ENCODE measurements at regions of chr17 and their contacts with region 1.

Region 1: DNA sequence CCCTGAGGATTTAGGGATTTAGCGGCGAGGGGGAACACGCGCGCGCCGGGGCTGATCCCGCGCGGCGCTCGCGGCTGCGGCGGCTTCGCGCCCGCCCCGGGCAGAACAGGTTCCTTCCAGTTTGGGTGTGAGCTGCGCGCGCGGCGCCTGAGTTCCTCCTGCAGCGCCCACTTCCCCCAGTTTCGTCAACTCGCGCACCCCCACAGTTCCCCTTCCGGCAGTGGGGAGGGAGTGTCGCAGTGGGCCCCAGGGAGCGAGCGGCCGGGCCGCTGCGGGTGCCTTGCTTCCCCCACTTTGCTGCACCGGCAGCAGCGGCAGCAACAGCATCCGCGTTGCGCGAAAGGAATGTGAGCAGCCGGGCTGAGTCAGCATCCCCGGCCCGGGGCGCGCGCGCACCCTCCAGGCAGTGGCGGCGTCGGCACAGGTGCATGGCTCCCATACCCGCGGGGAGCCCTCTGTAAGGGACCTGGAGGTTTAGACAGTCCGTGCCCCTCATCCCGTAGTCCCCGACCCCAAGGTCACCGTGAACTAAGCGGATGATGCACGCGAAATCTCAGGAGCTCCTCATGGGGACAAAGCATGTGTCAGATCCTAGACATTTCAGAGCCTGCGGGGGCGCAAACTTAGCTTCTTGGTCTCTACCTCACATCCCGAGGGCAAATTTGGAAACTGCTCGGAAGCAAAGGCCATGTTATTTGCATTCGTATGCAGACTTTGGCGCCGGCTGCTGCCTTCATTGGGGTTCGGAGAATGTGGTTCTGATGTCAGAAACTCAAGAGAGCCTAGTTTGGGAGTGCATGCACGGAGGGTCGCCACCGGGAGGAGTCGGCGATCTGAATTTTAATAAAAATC is 775 bp downstream of the ARSG start:
- DNase-seq: peak; percentile 93
- ATAC-seq: peak; percentile 78
- H3K4me3 Mint-ChIP-seq: peak overlapping the region; percentile 75
- H3K27ac Mint-ChIP-seq: peak overlapping the region; percentile 90
- H3K4me1 Mint-ChIP-seq: peaks cover 44% of the 10 kb centered on the region
- H3K27me3 Mint-ChIP-seq: no peaks in the 10 kb centered on the region

Region 2: DNA sequence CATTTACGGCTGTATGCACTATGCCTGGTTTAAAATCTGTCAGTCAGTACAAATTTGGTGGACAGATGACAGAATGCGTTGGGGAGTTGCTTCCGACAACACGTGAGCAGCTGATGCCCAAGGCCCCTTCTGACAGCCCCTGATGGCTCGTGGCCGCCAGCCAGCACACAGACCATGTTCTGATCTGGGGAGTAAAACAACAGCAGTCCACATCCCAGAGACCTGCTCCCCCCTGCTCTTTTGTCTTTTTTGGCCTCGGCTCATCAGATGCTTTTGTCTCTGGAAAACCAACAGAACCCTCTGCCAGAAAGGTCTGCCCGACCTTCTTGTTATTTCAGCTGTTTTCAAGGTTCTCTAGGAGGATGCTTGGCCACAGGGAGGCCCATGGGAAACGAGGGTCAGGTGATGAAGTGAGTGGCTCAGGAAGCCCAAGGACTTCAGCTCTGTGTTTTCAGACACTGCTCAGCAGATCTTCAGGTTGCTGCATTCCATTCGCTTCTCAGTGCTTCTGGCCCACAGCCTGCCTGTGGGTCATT is 10.1 kb after region 1 on chr17:
- POLR2A ChIA-PET with region 1: interaction called, 13 read pairs
- DNase-seq: no peak
- ATAC-seq: no peak
- H3K4me3 Mint-ChIP-seq: no peak overlapping the region
- H3K27ac Mint-ChIP-seq: no peak overlapping the region
- H3K4me1 Mint-ChIP-seq: peaks cover 16% of the 10 kb centered on the region
- H3K27me3 Mint-ChIP-seq: peaks cover 2% of the 10 kb centered on the region

Region 3: GRCh38 chr17:68346448-68346847 is 54.4 kb after region 1 on chr17:
- POLR2A ChIA-PET with region 1: interaction called, 55 read pairs
- DNase-seq: peak; percentile 75
- ATAC-seq: peak; percentile 86
- H3K4me3 Mint-ChIP-seq: peak overlapping the region; percentile 75
- H3K27ac Mint-ChIP-seq: peak overlapping the region; percentile 97
- H3K4me1 Mint-ChIP-seq: peaks cover 69% of the 10 kb centered on the region
- H3K27me3 Mint-ChIP-seq: no peaks in the 10 kb centered on the region

Region 4: GRCh38 chr17:68398691-68399637 is 106.9 kb after region 1 on chr17:
- POLR2A ChIA-PET with region 1: interaction called, 63 read pairs
- DNase-seq: peak; percentile 52
- ATAC-seq: peak; percentile 79
- H3K4me3 Mint-ChIP-seq: peak overlapping the region; percentile 65
- H3K27ac Mint-ChIP-seq: peak overlapping the region; percentile 94
- H3K4me1 Mint-ChIP-seq: peaks cover 26% of the 10 kb centered on the region
- H3K27me3 Mint-ChIP-seq: no peaks in the 10 kb centered on the region

Region 5: GRCh38 chr17:68457539-68458259 is 165.6 kb after region 1 on chr17:
- POLR2A ChIA-PET with region 1: interaction called, 38 read pairs
- DNase-seq: peak; percentile 99
- ATAC-seq: peak; percentile 92
- H3K4me3 Mint-ChIP-seq: peak overlapping the region; percentile 81
- H3K27ac Mint-ChIP-seq: peak overlapping the region; percentile 84
- H3K4me1 Mint-ChIP-seq: peaks cover 67% of the 10 kb centered on the region
- H3K27me3 Mint-ChIP-seq: no peaks in the 10 kb centered on the region

Measured in activated naive CD8-positive, alpha-beta T cell treated with anti-CD3 and anti-CD28 coated beads, Interleukin-2, amount 10 ng/mL, durations not matched to agents 7 days and 5 days (primary cell).